ENCODE measurements at regions of chr12 and their contacts with region 1.

Region 1: DNA sequence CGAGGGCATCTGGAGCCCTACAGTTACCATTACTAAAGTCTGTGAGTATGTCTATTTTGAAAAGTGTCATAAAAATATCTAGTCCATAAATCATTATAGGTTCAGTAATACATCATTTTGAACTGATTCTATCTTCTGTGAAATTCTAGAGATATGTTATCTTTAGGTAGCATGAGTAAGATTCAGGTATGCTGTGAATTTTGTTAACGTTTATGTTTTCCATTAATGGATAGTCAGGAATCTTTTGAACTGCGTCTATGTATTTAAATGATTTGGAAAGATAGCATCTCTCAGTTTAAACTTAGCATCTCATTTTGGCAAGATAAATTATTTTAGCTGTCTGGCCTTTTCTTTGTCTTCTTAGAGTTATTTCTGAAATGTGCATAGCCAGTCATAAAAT is 8.3 kb downstream of the ALG10B start:
- DNase-seq: no peak
- H3K4me3 ChIP-seq: no peak overlapping the region
- CTCF ChIP-seq: no peak

Region 2: GRCh38 chr12:38253778-38254177 is 71.1 kb before region 1 on chr12:
- CTCF ChIA-PET with region 1: no interaction called
- POLR2A ChIA-PET with region 1: no interaction called
- DNase-seq: no peak
- H3K4me3 ChIP-seq: no peak overlapping the region
- CTCF ChIP-seq: no peak

Region 3: GRCh38 chr12:38432381-38432780 is 107.5 kb after region 1 on chr12:
- CTCF ChIA-PET with region 1: no interaction called
- POLR2A ChIA-PET with region 1: no interaction called
- DNase-seq: no peak
- H3K4me3 ChIP-seq: no peak overlapping the region
- CTCF ChIP-seq: no peak

Region 4: GRCh38 chr12:38838056-38838850 is 513.4 kb after region 1 on chr12:
- CTCF ChIA-PET with region 1: no interaction called
- POLR2A ChIA-PET with region 1: no interaction called
- DNase-seq: no peak
- H3K4me3 ChIP-seq: no peak overlapping the region
- CTCF ChIP-seq: no peak

Region 5: DNA sequence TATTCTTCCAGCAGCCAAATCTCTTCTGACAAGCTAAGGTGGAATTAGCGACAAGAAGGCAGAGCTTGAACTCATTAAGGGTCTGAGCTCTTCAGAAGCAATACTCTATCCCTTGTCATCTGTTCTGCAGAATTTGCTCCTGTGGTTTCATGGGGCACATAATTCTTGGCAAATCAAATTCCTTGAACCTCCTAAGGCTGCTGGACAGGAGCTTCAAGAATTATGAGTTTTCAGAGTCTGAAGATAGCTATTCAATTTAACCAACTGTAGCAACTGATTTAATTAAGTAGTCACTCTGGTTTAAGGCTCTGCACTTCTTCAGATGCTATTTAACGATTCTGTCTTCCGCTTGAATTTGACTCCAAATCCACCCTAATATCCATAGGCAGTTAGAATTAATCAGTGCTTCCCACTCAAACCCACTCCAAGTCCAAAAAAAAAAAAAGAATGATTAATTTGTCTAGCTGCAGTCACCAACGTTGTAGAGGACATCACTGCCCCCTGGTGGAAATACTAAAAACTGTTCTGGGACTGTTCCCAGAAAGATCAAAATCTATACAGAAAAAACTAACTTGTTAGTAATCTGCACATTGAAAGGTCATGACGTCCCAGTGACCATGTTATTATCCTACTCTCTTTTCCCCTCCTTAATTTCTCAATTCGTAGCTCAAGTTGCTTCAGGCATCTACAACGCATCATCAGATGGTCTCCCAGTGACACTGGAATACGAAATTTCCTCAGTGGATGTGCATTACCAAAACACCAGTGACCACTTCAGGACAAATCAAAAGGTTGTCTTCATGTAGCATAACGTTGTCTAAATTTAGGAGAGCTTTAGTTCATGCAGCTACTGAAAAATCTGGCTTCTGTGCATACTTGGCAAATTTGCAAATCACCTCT is 948.2 kb after region 1 on chr12:
- CTCF ChIA-PET with region 1: interaction called, 45 read pairs
- POLR2A ChIA-PET with region 1: no interaction called
- DNase-seq: no peak
- H3K4me3 ChIP-seq: no peak overlapping the region
- CTCF ChIP-seq: peak; percentile 7